PC-9 (cell line): ENCODE measurements at regions of chr1 and their contacts with region 1.

Region 1: DNA sequence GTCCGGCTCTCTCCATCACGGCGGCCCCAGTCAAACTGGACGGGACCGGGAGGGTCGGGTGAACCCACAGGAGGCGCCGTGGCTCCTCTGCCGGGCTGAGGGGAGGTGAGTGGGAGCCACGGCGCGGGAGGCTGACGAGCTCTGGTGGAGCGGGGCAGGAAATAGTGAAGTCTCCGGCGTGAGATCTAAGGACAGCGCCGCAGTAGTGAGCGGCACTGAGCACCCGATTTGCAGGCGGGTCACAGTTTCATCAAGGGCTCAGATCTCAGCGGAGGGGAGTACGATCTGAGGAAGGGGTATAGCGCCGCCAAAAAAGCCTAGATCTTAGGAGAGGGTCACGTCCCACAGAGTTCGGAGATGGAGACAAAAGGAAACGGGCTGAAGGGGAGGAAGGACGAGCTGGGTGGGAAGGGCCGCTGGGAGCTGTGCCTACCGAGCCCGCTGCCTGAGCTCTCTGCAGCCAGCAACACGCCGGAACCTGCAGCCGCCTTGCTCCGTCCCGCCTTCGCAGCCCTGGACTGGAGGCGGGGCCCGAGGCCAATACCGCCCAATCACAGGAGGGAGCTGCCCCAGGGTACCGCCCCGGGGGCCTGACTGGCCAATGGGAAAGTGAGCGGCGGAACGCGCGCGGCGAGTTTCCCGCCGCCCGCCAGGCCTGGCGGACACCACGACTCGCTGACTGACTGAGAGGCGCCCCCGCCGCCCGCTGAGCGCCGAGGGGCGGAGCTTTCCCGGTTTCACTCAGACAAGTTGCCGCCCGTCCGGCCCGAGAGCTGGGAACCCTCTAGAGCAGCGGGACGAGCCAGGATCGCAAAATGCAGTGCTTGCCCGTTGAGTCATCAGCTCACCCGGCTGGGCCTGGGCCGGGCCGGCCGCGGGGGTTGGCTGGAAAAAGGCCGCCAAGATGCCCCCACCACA is 1.9 kb downstream of the SFN start:
- DNase-seq: peak; percentile 86 to 98
- H3K4me3 ChIP-seq: peak overlapping the region; percentile 85
- H3K27ac ChIP-seq: peak overlapping the region; percentile 100
- H3K4me1 ChIP-seq: peaks cover 57% of the 10 kb centered on the region
- H3K27me3 ChIP-seq: no peaks in the 10 kb centered on the region
- CTCF ChIP-seq: no peak

Region 2: DNA sequence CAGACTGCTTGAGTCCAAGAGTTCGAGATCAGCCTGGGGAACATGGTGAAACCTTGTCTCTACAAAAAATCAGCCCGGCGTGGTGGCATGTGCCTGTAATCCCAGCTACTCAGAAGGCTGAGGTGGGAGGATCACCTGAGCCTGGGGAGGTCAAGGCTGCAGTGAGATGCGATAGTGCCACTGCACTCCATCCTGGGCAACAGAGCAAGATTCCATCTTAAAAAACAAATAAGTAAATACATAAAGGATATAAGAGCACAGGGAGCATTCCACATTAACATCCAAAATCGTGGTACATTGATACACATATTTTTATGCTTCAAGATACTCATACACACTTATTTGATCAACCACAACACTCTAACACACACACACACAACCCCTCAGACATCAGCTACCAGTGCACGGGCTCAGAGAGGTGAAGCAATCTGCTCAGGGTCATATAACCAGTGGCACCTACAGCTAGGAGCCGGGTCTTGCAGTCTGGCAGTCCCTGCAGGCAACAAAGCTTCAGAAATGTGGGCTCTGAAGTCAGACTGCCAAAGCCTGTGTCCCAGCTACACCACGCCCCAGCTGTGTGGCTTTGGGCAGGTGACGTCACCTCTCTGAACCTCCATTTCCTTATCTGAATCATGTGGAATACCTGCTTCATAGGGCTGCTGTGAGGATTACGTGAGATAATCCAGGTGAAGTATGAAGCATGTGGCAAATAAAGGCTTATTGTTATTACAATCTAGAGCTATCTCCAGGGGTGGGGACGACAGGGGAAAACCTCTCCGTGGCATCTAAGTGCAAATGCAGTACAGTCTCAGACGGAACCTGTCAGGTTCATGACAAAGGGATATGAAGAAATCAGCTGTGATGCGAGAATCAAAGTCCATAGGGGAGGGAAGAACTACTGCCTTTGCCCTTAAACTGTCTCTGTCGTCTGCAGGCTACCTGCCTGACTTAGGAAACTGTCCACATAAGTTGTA is 506.2 kb before region 1 on chr1:
- CTCF ChIA-PET with region 1: no interaction called
- POLR2A ChIA-PET with region 1: no interaction called
- intact Hi-C with region 1: loop called (anchors 10 kb)
- DNase-seq: peak; percentile 88 to 97
- H3K4me3 ChIP-seq: no peak overlapping the region; the same call in 1 of the 2 replicates
- H3K27ac ChIP-seq: peak overlapping the region; percentile 84
- H3K4me1 ChIP-seq: peaks cover 54% of the 10 kb centered on the region
- H3K27me3 ChIP-seq: no peaks in the 10 kb centered on the region
- CTCF ChIP-seq: no peak

Region 3: DNA sequence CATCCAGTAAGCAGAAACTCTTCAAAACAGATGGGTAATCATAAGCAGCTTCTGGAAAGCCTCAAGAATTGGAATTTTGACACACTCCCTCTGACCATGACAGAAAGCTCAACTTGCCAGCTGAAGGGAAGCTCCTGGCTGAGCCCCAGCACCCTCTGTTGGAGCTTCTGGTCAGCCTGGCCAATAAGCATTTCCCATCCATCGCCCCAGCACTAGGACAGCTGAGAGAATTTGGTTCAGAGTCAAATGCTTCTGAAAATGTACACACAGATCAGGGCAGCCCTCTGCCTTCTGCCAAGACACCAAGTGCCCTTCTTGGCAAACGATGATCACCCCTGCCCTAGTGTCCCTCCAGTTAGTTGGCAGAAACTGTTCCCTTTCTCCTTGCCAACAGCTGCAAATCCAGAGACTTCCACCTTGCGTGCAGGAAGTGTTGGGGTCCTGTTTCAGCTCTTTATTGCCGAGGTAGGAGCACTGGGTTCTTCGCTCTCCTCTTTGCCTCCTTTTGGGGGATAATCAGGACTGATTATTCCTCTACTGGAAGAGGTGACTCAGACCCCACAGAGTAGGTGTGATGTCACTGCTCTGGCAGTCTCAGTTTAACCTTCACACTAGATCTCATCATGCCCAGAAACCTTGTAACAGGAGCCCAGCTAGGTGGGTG is 65.3 kb before region 1 on chr1:
- CTCF ChIA-PET with region 1: no interaction called
- POLR2A ChIA-PET with region 1: interaction called, 15 read pairs
- intact Hi-C with region 1: no loop called
- DNase-seq: peak; percentile 59 to 88
- H3K4me3 ChIP-seq: peak overlapping the region; percentile 37; the same call in 1 of the 2 replicates
- H3K27ac ChIP-seq: peak overlapping the region; percentile 97
- H3K4me1 ChIP-seq: peaks cover 33% of the 10 kb centered on the region
- H3K27me3 ChIP-seq: no peaks in the 10 kb centered on the region
- CTCF ChIP-seq: no peak

Region 4: GRCh38 chr1:26826261-26827105 is 38.4 kb before region 1 on chr1 and contains the start of gene ZDHHC18:
- CTCF ChIA-PET with region 1: no interaction called
- POLR2A ChIA-PET with region 1: interaction called, 7 read pairs
- intact Hi-C with region 1: loop called (anchors 1 kb)
- DNase-seq: peak in 1 of 2 experiments; percentile 70
- H3K4me3 ChIP-seq: peak within 1 kb of the TSS; percentile 62; the same call in 1 of the 2 replicates
- H3K27ac ChIP-seq: peak within 1 kb of the TSS; percentile 94
- H3K4me1 ChIP-seq: peaks cover 34% of the 10 kb centered on the region
- H3K27me3 ChIP-seq: no peaks in the 10 kb centered on the region
- CTCF ChIP-seq: no peak; the same call in 1 of the 2 replicates
- total RNA-seq, gene ZDHHC18: 27.2 and 36.1 TPM in 2 replicates